ENCODE measurements at regions of chr1 and their contacts with region 1.

Region 1: DNA sequence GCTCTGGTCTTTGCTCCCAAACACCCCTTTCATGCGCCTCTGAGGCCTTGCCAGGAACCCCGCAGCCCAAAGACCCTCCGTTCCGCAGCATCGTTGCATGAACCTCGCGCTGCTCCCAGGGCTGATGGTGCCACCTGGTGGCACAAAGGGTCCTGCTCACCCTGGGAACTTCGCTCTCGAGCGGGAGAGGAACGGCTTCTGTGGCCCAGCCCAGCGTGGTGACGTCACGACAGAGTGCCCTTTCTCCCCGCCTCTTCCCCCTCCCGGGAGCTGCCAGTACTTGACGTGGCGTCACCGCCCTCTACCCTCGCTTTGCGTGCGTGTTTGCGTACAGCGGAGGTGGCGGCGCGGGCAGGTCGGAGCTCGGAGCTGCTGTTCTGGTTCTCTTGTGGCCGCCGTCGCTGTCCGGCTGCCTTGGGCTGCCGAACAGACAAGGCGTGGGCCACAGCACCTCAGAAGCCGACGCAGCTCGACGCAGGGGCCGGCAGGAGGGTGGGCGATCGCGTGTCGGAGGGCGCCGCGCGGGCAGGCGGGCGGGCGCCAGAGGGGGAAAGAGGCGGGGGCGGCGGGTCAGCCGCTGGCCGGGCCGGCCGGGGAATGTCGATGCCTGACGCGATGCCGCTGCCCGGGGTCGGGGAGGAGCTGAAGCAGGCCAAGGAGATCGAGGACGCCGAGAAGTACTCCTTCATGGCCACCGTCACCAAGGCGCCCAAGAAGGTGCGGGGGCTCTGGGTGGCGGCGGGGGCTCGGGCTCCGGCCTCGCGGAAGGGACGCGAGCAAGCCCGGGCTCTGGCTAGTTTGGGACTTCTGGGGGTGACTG is at the start of gene AHCYL1:
- DNase-seq: peak; percentile 99
- H3K4me3 Mint-ChIP-seq: peak within 1 kb of the TSS; percentile 92
- H3K27ac Mint-ChIP-seq: peak within 1 kb of the TSS; percentile 99
- H3K4me1 Mint-ChIP-seq: peaks cover 58% of the 10 kb centered on the region
- H3K27me3 Mint-ChIP-seq: no peaks in the 10 kb centered on the region
- CTCF ChIP-seq: peak; percentile 89
- total RNA-seq, gene AHCYL1: 104 and 106 TPM in 2 replicates

Region 2: GRCh38 chr1:109548321-109549267 is 436.1 kb before region 1 on chr1 and contains the start of gene GNAI3:
- CTCF ChIA-PET with region 1: interaction called, 40 read pairs
- POLR2A ChIA-PET with region 1: interaction called, 59 read pairs
- intact Hi-C with region 1: loop called (anchors 1 kb)
- DNase-seq: peak; percentile 96
- H3K4me3 Mint-ChIP-seq: peak within 1 kb of the TSS; percentile 83
- H3K27ac Mint-ChIP-seq: peak within 1 kb of the TSS; percentile 98
- H3K4me1 Mint-ChIP-seq: peaks cover 13% of the 10 kb centered on the region
- H3K27me3 Mint-ChIP-seq: no peaks in the 10 kb centered on the region
- CTCF ChIP-seq: no peak
- total RNA-seq, gene GNAI3: 8.0 and 8.6 TPM in 2 replicates

Region 3: DNA sequence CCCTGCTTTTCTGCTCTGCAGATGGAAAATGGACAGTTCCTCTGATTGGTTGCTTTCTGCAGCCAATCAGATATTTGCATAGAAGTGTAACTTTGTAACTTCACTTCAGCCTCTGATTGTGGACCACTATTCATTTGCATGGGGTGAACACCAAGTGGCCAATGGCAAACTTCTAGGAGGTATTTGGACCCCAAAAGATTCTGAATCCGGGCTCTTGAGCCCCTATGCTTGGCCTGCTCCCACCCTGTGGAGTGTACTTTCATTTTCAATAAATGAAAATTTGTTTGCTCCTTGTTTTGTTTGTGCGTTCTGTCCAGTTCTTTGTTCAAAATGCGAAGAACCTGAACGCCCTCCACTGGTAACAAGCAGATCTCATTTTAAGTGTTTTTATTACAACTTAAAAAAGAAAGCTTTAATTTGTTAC is 335.2 kb before region 1 on chr1:
- CTCF ChIA-PET with region 1: interaction called, 17 read pairs
- POLR2A ChIA-PET with region 1: interaction called, 5 read pairs
- intact Hi-C with region 1: no loop called
- DNase-seq: no peak
- H3K4me3 Mint-ChIP-seq: no peak overlapping the region
- H3K27ac Mint-ChIP-seq: no peak overlapping the region
- H3K4me1 Mint-ChIP-seq: no peaks in the 10 kb centered on the region
- H3K27me3 Mint-ChIP-seq: peaks cover 28% of the 10 kb centered on the region
- CTCF ChIP-seq: no peak

Region 4: DNA sequence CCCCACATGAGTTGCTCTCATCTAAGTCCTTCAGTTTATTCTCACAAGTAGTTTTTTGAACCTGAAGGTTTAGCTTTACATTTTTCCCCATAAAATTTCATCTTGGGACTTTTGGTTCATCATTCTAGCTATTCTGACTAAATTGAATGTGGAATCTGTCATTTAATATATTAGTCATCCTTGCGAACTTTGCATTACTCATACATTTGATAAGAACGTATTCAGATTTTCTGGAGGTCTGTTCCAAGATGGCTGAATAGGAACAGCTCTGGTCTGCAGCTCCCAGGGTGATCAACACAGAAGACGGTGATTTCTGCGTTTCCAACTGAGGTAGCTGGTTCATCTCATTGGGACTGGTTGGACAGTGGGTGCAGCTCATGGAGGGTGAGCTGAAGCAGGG is 133.8 kb before region 1 on chr1:
- CTCF ChIA-PET with region 1: interaction called, 11 read pairs
- POLR2A ChIA-PET with region 1: interaction called, 3 read pairs
- intact Hi-C with region 1: no loop called
- DNase-seq: no peak
- H3K4me3 Mint-ChIP-seq: no peak overlapping the region
- H3K27ac Mint-ChIP-seq: no peak overlapping the region
- H3K4me1 Mint-ChIP-seq: peaks cover 12% of the 10 kb centered on the region
- H3K27me3 Mint-ChIP-seq: no peaks in the 10 kb centered on the region
- CTCF ChIP-seq: no peak

Region 5: DNA sequence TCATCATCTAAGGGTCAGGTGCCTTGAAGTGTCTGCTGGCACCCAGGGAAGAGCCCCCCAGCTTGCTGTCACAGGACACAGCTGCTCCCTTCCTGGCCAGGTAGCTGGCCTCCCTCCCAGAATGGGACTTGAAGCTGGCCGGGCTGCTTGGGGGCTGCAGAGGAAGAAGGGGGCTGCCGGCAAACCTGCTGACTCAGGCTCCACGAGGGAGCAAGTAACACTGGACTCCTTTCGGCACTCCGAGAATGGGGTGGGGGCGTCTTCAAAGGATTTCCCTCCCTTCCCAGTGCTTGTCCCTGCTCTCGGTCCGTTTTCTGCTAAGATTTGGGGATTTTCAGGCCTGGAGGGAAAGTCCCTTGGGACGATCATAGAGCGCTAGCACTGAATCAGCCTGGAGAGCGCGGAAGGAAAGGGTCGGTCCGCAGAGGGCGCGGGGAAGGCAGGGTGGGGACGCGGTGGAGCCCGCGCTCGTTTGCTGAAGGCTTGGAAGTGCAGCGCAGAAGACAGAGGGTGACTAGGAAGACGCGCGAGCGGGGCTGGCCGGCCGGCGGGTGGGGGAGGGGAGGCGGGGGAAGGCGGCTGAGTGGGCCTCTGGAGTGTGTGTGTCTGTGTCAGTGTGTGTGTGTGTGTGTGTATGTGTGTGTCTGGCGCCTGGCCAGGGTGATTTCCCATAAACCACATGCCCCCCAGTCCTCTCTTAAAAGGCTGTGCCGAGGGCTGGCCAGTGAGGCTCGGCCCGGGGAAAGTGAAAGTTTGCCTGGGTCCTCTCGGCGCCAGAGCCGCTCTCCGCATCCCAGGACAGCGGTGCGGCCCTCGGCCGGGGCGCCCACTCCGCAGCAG is 74.3 kb before region 1 on chr1 and contains the start of gene CSF1:
- CTCF ChIA-PET with region 1: interaction called, 7 read pairs
- POLR2A ChIA-PET with region 1: interaction called, 3 read pairs
- intact Hi-C with region 1: loop called (anchors 2 kb)
- DNase-seq: peak; percentile 72
- H3K4me3 Mint-ChIP-seq: peak within 1 kb of the TSS; percentile 73
- H3K27ac Mint-ChIP-seq: peak within 1 kb of the TSS; percentile 74
- H3K4me1 Mint-ChIP-seq: peaks cover 25% of the 10 kb centered on the region
- H3K27me3 Mint-ChIP-seq: no peaks in the 10 kb centered on the region
- CTCF ChIP-seq: no peak
- total RNA-seq, gene CSF1: 6.3 and 11.7 TPM in 2 replicates

Region 6: GRCh38 chr1:110034451-110035235 is 50.0 kb after region 1 on chr1 and contains the start of gene STRIP1:
- CTCF ChIA-PET with region 1: interaction called, 4 read pairs
- POLR2A ChIA-PET with region 1: interaction called, 24 read pairs
- intact Hi-C with region 1: no loop called
- DNase-seq: peak; percentile 96
- H3K4me3 Mint-ChIP-seq: peak within 1 kb of the TSS; percentile 97
- H3K27ac Mint-ChIP-seq: peak within 1 kb of the TSS; percentile 94
- H3K4me1 Mint-ChIP-seq: peaks cover 18% of the 10 kb centered on the region
- H3K27me3 Mint-ChIP-seq: no peaks in the 10 kb centered on the region
- CTCF ChIP-seq: no peak
- total RNA-seq, gene STRIP1: 35.6 and 40.6 TPM in 2 replicates